ENCODE measurements at regions of chr11 and their contacts with region 1.

Region 1: GRCh38 chr11:74388678-74389327 is 9.4 kb downstream of the PGM2L1 start:
- DNase-seq: peak; percentile 57 to 80
- H3K4me3 ChIP-seq: no peak overlapping the region
- H3K4me3 Mint-ChIP-seq: no peak overlapping the region
- H3K27ac Mint-ChIP-seq: no peak overlapping the region
- H3K4me1 ChIP-seq: no peaks in the 10 kb centered on the region
- H3K4me1 Mint-ChIP-seq: no peaks in the 10 kb centered on the region
- H3K27me3 ChIP-seq: no peaks in the 10 kb centered on the region
- H3K27me3 Mint-ChIP-seq: peaks cover 7% of the 10 kb centered on the region
- CTCF ChIP-seq: peak; percentile 88 to 91

Region 2: DNA sequence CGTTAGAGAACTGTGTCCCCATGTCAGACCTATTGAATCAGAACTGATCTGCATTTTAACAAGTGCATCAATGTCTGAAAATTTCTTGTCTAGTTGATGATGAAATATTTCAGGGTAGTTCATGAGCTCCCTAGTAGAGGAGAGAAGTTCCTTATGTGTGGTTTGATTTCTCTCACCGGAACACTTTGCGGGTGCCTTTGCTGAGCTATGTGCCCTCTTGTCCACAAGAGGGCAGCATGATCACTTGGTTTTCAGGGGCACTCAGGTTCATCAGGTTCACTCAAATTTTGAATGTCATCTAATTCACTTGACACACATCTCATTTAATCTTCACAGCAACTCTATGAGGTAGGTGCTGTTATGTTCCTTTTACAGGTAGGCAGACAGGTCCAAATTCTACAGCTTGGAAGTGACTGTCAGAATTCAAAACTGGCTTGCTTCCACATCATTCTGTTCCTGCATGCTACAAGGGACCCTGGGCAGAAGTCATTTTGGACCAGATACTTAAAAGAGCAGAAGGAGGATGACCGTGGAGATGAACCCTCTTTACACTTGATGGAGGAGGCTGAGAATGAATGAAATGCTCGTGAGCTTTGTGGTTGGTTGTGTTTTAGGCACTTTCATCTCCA is 132.9 kb before region 1 on chr11:
- CTCF ChIA-PET with region 1: interaction called, 5 read pairs
- POLR2A ChIA-PET with region 1: no interaction called
- intact Hi-C with region 1: loop called (anchors 1 kb)
- DNase-seq: peak in 1 of 2 experiments; percentile 65
- H3K4me3 ChIP-seq: no peak overlapping the region
- H3K4me3 Mint-ChIP-seq: no peak overlapping the region
- H3K27ac Mint-ChIP-seq: no peak overlapping the region
- H3K4me1 ChIP-seq: no peaks in the 10 kb centered on the region
- H3K4me1 Mint-ChIP-seq: no peaks in the 10 kb centered on the region
- H3K27me3 ChIP-seq: no peaks in the 10 kb centered on the region
- H3K27me3 Mint-ChIP-seq: no peaks in the 10 kb centered on the region
- CTCF ChIP-seq: peak; percentile 91 to 94

Region 3: GRCh38 chr11:74327076-74327475 is 61.7 kb before region 1 on chr11:
- CTCF ChIA-PET with region 1: interaction called, 11 read pairs
- POLR2A ChIA-PET with region 1: no interaction called
- intact Hi-C with region 1: no loop called
- DNase-seq: no peak
- H3K4me3 ChIP-seq: no peak overlapping the region
- H3K4me3 Mint-ChIP-seq: no peak overlapping the region
- H3K27ac Mint-ChIP-seq: no peak overlapping the region
- H3K4me1 ChIP-seq: no peaks in the 10 kb centered on the region
- H3K4me1 Mint-ChIP-seq: no peaks in the 10 kb centered on the region
- H3K27me3 ChIP-seq: no peaks in the 10 kb centered on the region
- H3K27me3 Mint-ChIP-seq: no peaks in the 10 kb centered on the region
- CTCF ChIP-seq: no peak

Region 4: GRCh38 chr11:74418509-74418895 is 29.7 kb after region 1 on chr11:
- CTCF ChIA-PET with region 1: no interaction called
- POLR2A ChIA-PET with region 1: no interaction called
- intact Hi-C with region 1: no loop called
- DNase-seq: no peak
- H3K4me3 ChIP-seq: no peak overlapping the region
- H3K4me3 Mint-ChIP-seq: no peak overlapping the region
- H3K27ac Mint-ChIP-seq: no peak overlapping the region
- H3K4me1 ChIP-seq: peaks cover 22% of the 10 kb centered on the region
- H3K4me1 Mint-ChIP-seq: peaks cover 7% of the 10 kb centered on the region
- H3K27me3 ChIP-seq: no peaks in the 10 kb centered on the region
- H3K27me3 Mint-ChIP-seq: peaks cover 3% of the 10 kb centered on the region
- CTCF ChIP-seq: no peak

Region 5: GRCh38 chr11:74443071-74443864 is 54.5 kb after region 1 on chr11:
- CTCF ChIA-PET with region 1: interaction called, 65 read pairs
- POLR2A ChIA-PET with region 1: interaction called, 4 read pairs
- intact Hi-C with region 1: no loop called
- DNase-seq: peak in 1 of 2 experiments; percentile 57
- H3K4me3 ChIP-seq: no peak overlapping the region
- H3K4me3 Mint-ChIP-seq: no peak overlapping the region
- H3K27ac Mint-ChIP-seq: no peak overlapping the region
- H3K4me1 ChIP-seq: peaks cover 19% of the 10 kb centered on the region
- H3K4me1 Mint-ChIP-seq: peaks cover 21% of the 10 kb centered on the region
- H3K27me3 ChIP-seq: no peaks in the 10 kb centered on the region
- H3K27me3 Mint-ChIP-seq: no peaks in the 10 kb centered on the region
- CTCF ChIP-seq: no peak

Region 6: DNA sequence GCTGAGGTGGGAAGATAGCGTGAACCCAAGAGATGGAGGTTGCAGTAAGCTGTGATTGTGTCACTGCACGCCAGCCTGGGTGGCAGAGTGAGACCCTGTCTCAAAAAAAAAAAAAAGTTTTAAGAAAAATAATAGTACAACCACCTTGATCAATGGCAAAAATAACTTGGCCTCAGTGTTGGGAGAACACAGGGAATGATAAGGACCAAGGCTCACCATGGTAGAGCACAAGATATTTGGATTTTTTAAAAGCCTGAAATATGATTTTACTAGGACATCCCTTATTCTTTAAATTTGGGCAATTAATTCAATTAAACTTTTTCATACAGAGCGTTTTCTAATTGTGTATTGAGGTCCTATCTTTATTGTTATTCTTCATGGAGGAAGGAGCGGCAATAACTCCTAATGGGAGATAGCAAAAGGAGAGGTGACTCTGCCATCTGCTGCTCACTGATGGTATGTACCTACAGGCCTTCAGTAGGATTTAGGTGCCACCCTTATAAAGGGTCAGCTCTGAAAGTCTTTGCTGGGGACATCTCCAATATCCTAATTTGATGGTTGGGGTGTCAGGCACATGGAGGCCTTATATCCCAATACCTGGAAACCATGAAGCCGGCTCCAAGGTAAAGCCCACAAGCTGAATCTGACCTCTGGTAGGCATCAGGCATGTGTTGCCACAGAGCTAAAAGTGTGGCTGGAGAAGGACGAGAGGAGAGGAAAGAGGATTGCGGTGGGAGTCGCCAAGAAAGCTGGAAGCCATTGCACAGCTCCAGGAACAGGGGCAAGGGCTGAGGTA is 181.7 kb after region 1 on chr11:
- CTCF ChIA-PET with region 1: interaction called, 8 read pairs
- POLR2A ChIA-PET with region 1: no interaction called
- intact Hi-C with region 1: loop called (anchors 1 kb)
- DNase-seq: peak; percentile 72 to 78
- H3K4me3 ChIP-seq: no peak overlapping the region
- H3K4me3 Mint-ChIP-seq: no peak overlapping the region
- H3K27ac Mint-ChIP-seq: no peak overlapping the region
- H3K4me1 ChIP-seq: peaks cover 12% of the 10 kb centered on the region; the same call in 1 of the 2 replicates
- H3K4me1 Mint-ChIP-seq: peaks cover 17% of the 10 kb centered on the region
- H3K27me3 ChIP-seq: no peaks in the 10 kb centered on the region
- H3K27me3 Mint-ChIP-seq: no peaks in the 10 kb centered on the region
- CTCF ChIP-seq: peak; percentile 89 to 95